ENCODE measurements at regions of chr9 and their contacts with region 1.

Region 1: GRCh38 chr9:35664531-35665470 is at the start of gene ARHGEF39:
- DNase-seq: peak in 12 of 14 experiments; percentile 35 to 84 (median 55)
- ATAC-seq: peak; percentile 74
- H3K4me3 ChIP-seq: peak within 1 kb of the TSS; percentile 61
- H3K4me3 Mint-ChIP-seq: peak within 1 kb of the TSS; percentile 85
- H3K27ac ChIP-seq: peak within 1 kb of the TSS; percentile 31 to 50
- H3K27ac Mint-ChIP-seq: peak within 1 kb of the TSS; percentile 85
- H3K4me1 ChIP-seq: peaks cover 61% of the 10 kb centered on the region
- H3K4me1 Mint-ChIP-seq: peaks cover 71% of the 10 kb centered on the region
- H3K27me3 ChIP-seq: no peaks in the 10 kb centered on the region
- H3K27me3 Mint-ChIP-seq: no peaks in the 10 kb centered on the region
- CTCF ChIP-seq: no peak
- total RNA-seq, gene ARHGEF39: 0.08 to 0.17 TPM

Region 2: DNA sequence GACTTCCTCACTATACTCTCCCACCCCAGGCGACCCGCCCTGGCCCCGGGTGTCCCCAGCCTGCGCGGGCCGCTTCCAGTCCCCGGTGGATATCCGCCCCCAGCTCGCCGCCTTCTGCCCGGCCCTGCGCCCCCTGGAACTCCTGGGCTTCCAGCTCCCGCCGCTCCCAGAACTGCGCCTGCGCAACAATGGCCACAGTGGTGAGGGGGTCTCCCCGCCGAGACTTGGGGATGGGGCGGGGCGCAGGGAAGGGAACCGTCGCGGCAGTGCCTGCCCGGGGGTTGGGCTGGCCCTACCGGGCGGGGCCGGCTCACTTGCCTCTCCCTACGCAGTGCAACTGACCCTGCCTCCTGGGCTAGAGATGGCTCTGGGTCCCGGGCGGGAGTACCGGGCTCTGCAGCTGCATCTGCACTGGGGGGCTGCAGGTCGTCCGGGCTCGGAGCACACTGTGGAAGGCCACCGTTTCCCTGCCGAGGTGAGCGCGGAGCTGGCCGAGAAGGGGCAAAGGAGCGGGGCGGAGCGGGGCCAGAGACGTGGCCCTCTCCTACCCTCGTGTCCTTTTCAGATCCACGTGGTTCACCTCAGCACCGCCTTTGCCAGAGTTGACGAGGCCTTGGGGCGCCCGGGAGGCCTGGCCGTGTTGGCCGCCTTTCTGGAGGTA is 11.1 kb after region 1 on chr9:
- CTCF ChIA-PET with region 1: interaction called, 3 read pairs
- POLR2A ChIA-PET with region 1: interaction called, 10 read pairs
- intact Hi-C with region 1: no loop called
- DNase-seq: peak in 5 of 14 experiments; percentile 13 to 59 (median 36)
- ATAC-seq: peak; percentile 60
- H3K4me3 ChIP-seq: peak overlapping the region; percentile 58
- H3K4me3 Mint-ChIP-seq: peak overlapping the region; percentile 80
- H3K27ac ChIP-seq: no peak overlapping the region
- H3K27ac Mint-ChIP-seq: no peak overlapping the region
- H3K4me1 ChIP-seq: peaks cover 15% of the 10 kb centered on the region
- H3K4me1 Mint-ChIP-seq: peaks cover 15% of the 10 kb centered on the region
- H3K27me3 ChIP-seq: peaks cover 0 to 6% of the 10 kb centered on the region in 2 experiments
- H3K27me3 Mint-ChIP-seq: peaks cover 10% of the 10 kb centered on the region
- CTCF ChIP-seq: no peak

Region 3: DNA sequence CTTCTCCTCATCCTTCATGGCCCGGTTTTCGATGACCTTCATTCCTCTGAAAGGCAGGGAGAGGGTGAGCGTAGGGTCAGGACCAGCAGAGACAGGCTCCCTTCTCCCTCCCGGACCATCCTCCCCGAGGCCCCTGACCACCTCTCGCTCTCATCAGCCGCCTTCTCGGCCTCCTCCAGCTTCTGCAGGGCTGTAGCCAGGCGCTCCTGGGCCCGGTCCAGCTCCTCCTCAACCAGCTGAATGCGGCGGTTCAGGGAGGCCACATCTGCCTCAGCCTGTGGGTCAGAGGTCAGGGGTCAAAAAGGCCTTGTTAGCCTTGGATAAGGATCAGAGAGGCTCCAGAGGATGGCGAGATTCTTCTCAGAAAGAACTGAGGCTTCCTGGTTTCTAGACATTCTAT is 20.7 kb after region 1 on chr9:
- CTCF ChIA-PET with region 1: interaction called, 3 read pairs
- POLR2A ChIA-PET with region 1: interaction called, 10 read pairs
- intact Hi-C with region 1: loop called in 1 of 2 experiments (anchors 2 kb)
- DNase-seq: no peak
- ATAC-seq: no peak
- H3K4me3 ChIP-seq: no peak overlapping the region
- H3K4me3 Mint-ChIP-seq: no peak overlapping the region
- H3K27ac ChIP-seq: no peak overlapping the region
- H3K27ac Mint-ChIP-seq: no peak overlapping the region
- H3K4me1 ChIP-seq: peaks cover 17% of the 10 kb centered on the region
- H3K4me1 Mint-ChIP-seq: peaks cover 13% of the 10 kb centered on the region
- H3K27me3 ChIP-seq: no peaks in the 10 kb centered on the region
- H3K27me3 Mint-ChIP-seq: no peaks in the 10 kb centered on the region
- CTCF ChIP-seq: no peak

Region 4: DNA sequence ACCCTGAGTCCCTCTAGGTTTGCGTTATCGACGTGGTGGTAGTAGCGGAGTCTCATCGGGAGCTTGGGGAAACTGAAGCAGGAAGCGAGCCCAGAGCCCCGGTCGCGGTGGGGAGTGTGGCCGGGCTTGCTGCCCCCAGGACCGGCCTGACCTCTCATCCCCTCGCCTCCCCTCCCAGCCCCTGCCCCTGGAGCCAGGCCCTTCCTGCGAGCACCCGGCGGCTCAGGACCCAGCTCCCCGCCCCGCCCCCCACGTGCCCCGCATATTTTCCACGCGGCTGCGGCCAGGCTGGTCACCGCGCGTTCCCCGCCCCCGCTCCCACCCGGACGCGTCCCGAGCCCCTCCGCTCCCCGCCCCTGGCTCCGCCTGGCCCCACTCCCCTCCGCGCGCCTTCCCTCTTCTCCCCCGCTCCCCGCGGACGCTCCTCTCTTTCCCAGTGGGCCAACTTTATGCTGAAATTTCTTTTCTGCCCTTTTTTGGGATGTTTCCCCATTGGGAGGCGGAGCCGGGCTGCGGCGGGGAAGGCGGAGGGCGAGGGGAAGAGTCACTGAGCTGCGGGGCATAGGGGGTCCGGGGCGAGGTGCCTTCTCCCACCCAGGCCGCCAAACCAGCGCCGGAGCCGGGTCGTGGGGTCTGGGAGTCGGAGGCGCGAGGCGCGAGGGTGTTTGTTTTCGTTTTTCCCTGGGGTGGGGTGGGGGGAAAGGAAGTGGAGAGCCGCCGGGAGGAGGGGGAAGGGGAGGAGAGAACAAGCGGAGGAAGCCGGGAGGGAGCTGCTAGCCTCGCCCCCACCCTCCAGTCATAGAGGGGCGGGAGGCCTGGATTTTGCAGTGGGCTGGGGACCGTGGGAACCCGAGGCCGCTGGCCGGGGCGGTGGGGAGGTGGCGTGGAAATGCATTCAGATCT is 25.9 kb after region 1 on chr9:
- CTCF ChIA-PET with region 1: interaction called, 11 read pairs
- POLR2A ChIA-PET with region 1: interaction called, 10 read pairs
- intact Hi-C with region 1: loop called in 1 of 2 experiments (anchors 2 kb)
- DNase-seq: peak in 8 of 14 experiments; percentile 12 to 57 (median 38)
- ATAC-seq: peak; percentile 63
- H3K4me3 ChIP-seq: peak overlapping the region; percentile 88
- H3K4me3 Mint-ChIP-seq: peak overlapping the region; percentile 92
- H3K27ac ChIP-seq: peak overlapping the region; percentile 40 to 55
- H3K27ac Mint-ChIP-seq: peak overlapping the region; percentile 73
- H3K4me1 ChIP-seq: peaks cover 26% of the 10 kb centered on the region
- H3K4me1 Mint-ChIP-seq: peaks cover 28% of the 10 kb centered on the region
- H3K27me3 ChIP-seq: no peaks in the 10 kb centered on the region
- H3K27me3 Mint-ChIP-seq: no peaks in the 10 kb centered on the region
- CTCF ChIP-seq: no peak